ENCODE measurements at regions of chr2 and their contacts with region 1.

Region 1: GRCh38 chr2:183229386-183229785 is 105.1 kb downstream of the NUP35 start:
- DNase-seq: peak; percentile 36
- ATAC-seq: peak; percentile 76
- H3K4me3 Mint-ChIP-seq: no peak overlapping the region
- H3K27ac Mint-ChIP-seq: no peak overlapping the region
- H3K4me1 Mint-ChIP-seq: peaks cover 10% of the 10 kb centered on the region
- H3K27me3 Mint-ChIP-seq: peaks cover 2% of the 10 kb centered on the region

Region 2: DNA sequence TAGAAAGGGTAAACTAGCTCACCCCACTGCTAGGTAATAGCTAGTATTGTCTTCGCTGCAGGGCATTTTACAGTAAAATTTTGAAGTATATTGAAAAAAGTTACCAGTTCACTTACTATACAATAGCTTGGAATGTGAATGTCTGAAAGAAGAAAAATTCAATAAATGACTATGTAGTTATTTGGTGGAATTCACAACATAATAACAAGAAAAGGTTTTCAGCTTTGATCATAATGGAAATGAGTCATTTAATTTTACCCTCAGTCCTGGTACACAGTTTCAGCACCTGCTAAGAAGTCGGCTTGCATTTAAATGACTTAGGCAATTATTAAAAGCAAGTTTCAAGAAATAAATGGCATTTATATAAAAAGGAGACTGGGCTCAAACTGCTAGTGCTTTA is 14.7 kb before region 1 on chr2:
- CTCF ChIA-PET with region 1: interaction called, 4 read pairs
- POLR2A ChIA-PET with region 1: no interaction called
- intact Hi-C with region 1: loop called in 1 of 2 experiments (anchors 1 kb)
- DNase-seq: no peak
- ATAC-seq: peak; percentile 42
- H3K4me3 Mint-ChIP-seq: no peak overlapping the region
- H3K27ac Mint-ChIP-seq: no peak overlapping the region
- H3K4me1 Mint-ChIP-seq: peaks cover 17% of the 10 kb centered on the region
- H3K27me3 Mint-ChIP-seq: no peaks in the 10 kb centered on the region

Measured in activated CD4-positive, alpha-beta T cell treated with anti-CD3 and anti-CD28 coated beads for 36 hours (primary cell).